Activated CD4-positive, alpha-beta T cell treated with anti-CD3 and anti-CD28 coated beads for 36 hours (primary cell): ENCODE measurements at regions of chr6 and their contacts with region 1.

Region 1: DNA sequence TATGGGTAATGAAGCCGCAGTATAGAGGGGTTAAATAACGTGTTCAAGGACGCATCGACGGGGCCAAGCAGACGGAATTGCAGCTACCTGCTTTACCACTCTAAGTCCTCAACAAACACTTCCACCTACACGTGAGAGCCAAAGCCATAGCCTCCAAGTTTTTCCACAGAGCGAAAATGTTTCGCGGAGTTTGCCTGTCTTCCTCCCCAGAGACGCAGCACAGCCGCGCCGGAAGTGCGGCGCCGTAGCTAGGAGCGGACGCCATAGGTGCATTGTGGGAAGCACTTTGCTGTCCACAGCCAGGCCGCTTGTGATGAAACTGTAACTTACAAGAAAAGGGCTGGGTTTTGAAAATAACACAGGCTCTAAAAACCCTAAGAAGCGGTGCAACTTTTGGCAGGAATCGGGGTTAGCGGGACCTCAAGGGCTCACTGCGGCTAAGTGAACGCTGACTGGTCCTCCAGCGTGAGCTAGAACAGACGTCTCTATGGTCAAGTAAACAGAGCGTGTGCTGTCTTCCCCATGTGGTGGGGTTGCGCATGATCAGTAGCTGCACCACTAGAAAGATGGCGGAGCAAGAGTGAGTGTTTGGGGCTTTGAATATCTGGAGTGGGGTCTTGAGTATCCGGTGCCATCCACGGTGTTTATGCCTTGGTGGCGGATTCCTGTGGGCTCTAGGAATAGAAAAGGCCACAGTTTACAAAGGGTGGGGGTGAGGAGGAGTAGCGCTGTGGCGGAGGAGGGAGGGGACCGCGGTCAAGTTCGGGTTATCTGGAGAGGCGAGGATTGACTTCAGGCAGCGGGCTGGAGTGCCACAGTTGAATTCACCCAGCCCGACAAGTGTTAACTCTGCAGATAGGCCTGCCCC is at the start of gene RPL7L1:
- DNase-seq: peak; percentile 89
- ATAC-seq: peak; percentile 96
- H3K4me3 Mint-ChIP-seq: peak within 1 kb of the TSS; percentile 99
- H3K27ac Mint-ChIP-seq: peak within 1 kb of the TSS; percentile 100
- H3K4me1 Mint-ChIP-seq: peaks cover 20% of the 10 kb centered on the region
- H3K27me3 Mint-ChIP-seq: no peaks in the 10 kb centered on the region
- total RNA-seq, gene RPL7L1: 124 to 152 TPM

Region 2: GRCh38 chr6:41787219-41787917 is 1092.2 kb before region 1 on chr6 and contains the start of gene TOMM6:
- CTCF ChIA-PET with region 1: no interaction called
- POLR2A ChIA-PET with region 1: no interaction called
- intact Hi-C with region 1: loop called in 1 of 2 experiments (anchors 5 kb)
- DNase-seq: peak; percentile 98
- ATAC-seq: peak; percentile 86
- H3K4me3 Mint-ChIP-seq: peak within 1 kb of the TSS; percentile 96
- H3K27ac Mint-ChIP-seq: peak within 1 kb of the TSS; percentile 98
- H3K4me1 Mint-ChIP-seq: peaks cover 19% of the 10 kb centered on the region
- H3K27me3 Mint-ChIP-seq: peaks cover 2% of the 10 kb centered on the region
- total RNA-seq, gene TOMM6: 282 to 345 TPM

Region 3: GRCh38 chr6:42661540-42662153 is 218.0 kb before region 1 on chr6:
- CTCF ChIA-PET with region 1: interaction called, 42 read pairs
- POLR2A ChIA-PET with region 1: no interaction called
- intact Hi-C with region 1: loop called (anchors 1 kb)
- DNase-seq: peak; percentile 90
- ATAC-seq: peak; percentile 91
- H3K4me3 Mint-ChIP-seq: no peak overlapping the region
- H3K27ac Mint-ChIP-seq: no peak overlapping the region
- H3K4me1 Mint-ChIP-seq: no peaks in the 10 kb centered on the region
- H3K27me3 Mint-ChIP-seq: no peaks in the 10 kb centered on the region

Region 4: GRCh38 chr6:42726485-42727086 is 153.0 kb before region 1 on chr6:
- CTCF ChIA-PET with region 1: interaction called, 6 read pairs
- POLR2A ChIA-PET with region 1: interaction called, 4 read pairs
- intact Hi-C with region 1: loop called (anchors 1 kb)
- DNase-seq: peak; percentile 85
- ATAC-seq: peak; percentile 98
- H3K4me3 Mint-ChIP-seq: peak overlapping the region; percentile 69
- H3K27ac Mint-ChIP-seq: peak overlapping the region; percentile 95
- H3K4me1 Mint-ChIP-seq: peaks cover 19% of the 10 kb centered on the region
- H3K27me3 Mint-ChIP-seq: no peaks in the 10 kb centered on the region

Region 5: GRCh38 chr6:42782622-42783176 is 96.9 kb before region 1 on chr6:
- CTCF ChIA-PET with region 1: no interaction called
- POLR2A ChIA-PET with region 1: interaction called, 4 read pairs
- intact Hi-C with region 1: loop called (anchors 1 to 2 kb)
- DNase-seq: peak; percentile 83
- ATAC-seq: peak; percentile 64
- H3K4me3 Mint-ChIP-seq: peak overlapping the region; percentile 81
- H3K27ac Mint-ChIP-seq: peak overlapping the region; percentile 96
- H3K4me1 Mint-ChIP-seq: peaks cover 25% of the 10 kb centered on the region
- H3K27me3 Mint-ChIP-seq: no peaks in the 10 kb centered on the region